ENCODE measurements at regions of chr10 and their contacts with region 1.

Region 1: GRCh38 chr10:73252445-73253224 is at the start of gene MRPS16:
- DNase-seq: peak; percentile 95 to 98 (median 97)
- H3K4me3 ChIP-seq: peak within 1 kb of the TSS; percentile 88 to 99 (median 98)
- H3K27ac ChIP-seq: peak within 1 kb of the TSS; percentile 95 to 97
- H3K4me1 ChIP-seq: peaks cover 15 to 36% (median 29%) of the 10 kb centered on the region in 4 experiments
- H3K27me3 ChIP-seq: no peaks in the 10 kb centered on the region

Region 2: DNA sequence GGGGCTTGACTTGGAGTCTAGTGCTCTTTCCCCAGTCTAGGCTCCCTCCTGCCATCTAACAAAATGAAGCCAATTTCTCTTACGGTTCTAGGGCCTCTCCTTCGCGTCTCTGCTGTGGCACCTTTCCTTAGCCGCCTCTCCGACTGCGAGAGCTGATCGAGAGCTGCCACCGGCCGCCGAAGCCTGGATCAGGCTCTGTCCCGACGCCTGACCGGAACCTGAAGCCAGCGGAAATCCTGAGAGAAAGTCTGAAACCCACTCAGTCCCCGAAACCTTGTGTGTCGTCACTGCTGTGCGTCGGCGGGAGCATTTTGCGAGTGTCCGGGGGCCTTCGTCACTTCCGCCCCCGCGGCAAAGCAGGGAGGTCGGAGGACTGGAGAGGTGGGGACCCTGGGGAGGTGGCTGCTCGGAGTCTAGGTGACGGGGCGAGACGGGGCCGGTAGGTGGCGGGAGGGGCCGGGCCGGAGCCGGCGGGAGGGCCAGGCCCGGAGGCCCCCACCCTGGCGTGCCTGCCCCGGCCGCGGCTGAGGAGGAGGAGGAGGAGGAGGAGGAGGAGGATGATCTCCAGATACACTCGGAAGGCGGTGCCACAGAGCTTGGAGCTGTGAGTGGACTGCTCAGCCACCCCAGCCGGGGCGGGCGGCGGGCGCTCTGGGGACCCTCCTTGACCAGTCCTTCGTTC is 84.7 kb before region 1 on chr10 and contains the starts of genes ECD and FAM149B1:
- CTCF ChIA-PET with region 1: no interaction called
- POLR2A ChIA-PET with region 1: no interaction called
- DNase-seq: peak; percentile 95 to 97 (median 95)
- H3K4me3 ChIP-seq: peak within 1 kb of the TSS; percentile 96 to 100 (median 100)
- H3K27ac ChIP-seq: peak within 1 kb of the TSS; percentile 95 to 99
- H3K4me1 ChIP-seq: peaks cover 7 to 20% (median 11%) of the 10 kb centered on the region in 4 experiments
- H3K27me3 ChIP-seq: no peaks in the 10 kb centered on the region

Region 3: GRCh38 chr10:73263948-73264347 is 11.3 kb after region 1 on chr10:
- CTCF ChIA-PET with region 1: interaction called, 15 read pairs
- POLR2A ChIA-PET with region 1: no interaction called
- DNase-seq: peak in 2 of 3 donors; percentile 42 to 49
- H3K4me3 ChIP-seq: no peak overlapping the region
- H3K27ac ChIP-seq: no peak overlapping the region
- H3K4me1 ChIP-seq: no peaks in the 10 kb centered on the region
- H3K27me3 ChIP-seq: no peaks in the 10 kb centered on the region